ENCODE measurements at regions of chr11 and their contacts with region 1.

Region 1: GRCh38 chr11:109939166-109939810 is 153.9 kb upstream of the ZC3H12C start:
- DNase-seq: peak; percentile 84
- ATAC-seq: peak; percentile 72
- H3K4me3 ChIP-seq: no peak overlapping the region
- H3K27ac ChIP-seq: no peak overlapping the region
- H3K4me1 ChIP-seq: peaks cover 3% of the 10 kb centered on the region; the same call in 1 of the 2 replicates
- H3K27me3 ChIP-seq: no peaks in the 10 kb centered on the region
- CTCF ChIP-seq: peak; percentile 82
- POLR2A ChIP-seq: no peak
- RAD21 ChIP-seq: peak; percentile 89

Region 2: GRCh38 chr11:108887436-108888238 is 1051.7 kb before region 1 on chr11:
- CTCF ChIA-PET with region 1: no interaction called
- POLR2A ChIA-PET with region 1: no interaction called
- dilution Hi-C with region 1: no loop called
- in situ Hi-C with region 1: no loop called
- intact Hi-C with region 1: loop called (anchors 10 kb)
- DNase-seq: no peak
- ATAC-seq: no peak
- H3K4me3 ChIP-seq: no peak overlapping the region
- H3K27ac ChIP-seq: no peak overlapping the region
- H3K4me1 ChIP-seq: peaks cover 8% of the 10 kb centered on the region
- H3K27me3 ChIP-seq: no peaks in the 10 kb centered on the region
- CTCF ChIP-seq: no peak
- POLR2A ChIP-seq: no peak
- RAD21 ChIP-seq: no peak

Region 3: GRCh38 chr11:109432105-109432504 is 507.2 kb before region 1 on chr11:
- CTCF ChIA-PET with region 1: no interaction called
- POLR2A ChIA-PET with region 1: no interaction called
- dilution Hi-C with region 1: no loop called
- in situ Hi-C with region 1: no loop called
- intact Hi-C with region 1: loop called (anchors 5 kb)
- DNase-seq: peak; percentile 60
- ATAC-seq: peak; percentile 74
- H3K4me3 ChIP-seq: no peak overlapping the region
- H3K27ac ChIP-seq: peak overlapping the region; percentile 93; the same call in 1 of the 2 replicates
- H3K4me1 ChIP-seq: peaks cover 7% of the 10 kb centered on the region; the same call in 1 of the 2 replicates
- H3K27me3 ChIP-seq: no peaks in the 10 kb centered on the region
- CTCF ChIP-seq: no peak
- POLR2A ChIP-seq: no peak
- RAD21 ChIP-seq: no peak

Region 4: DNA sequence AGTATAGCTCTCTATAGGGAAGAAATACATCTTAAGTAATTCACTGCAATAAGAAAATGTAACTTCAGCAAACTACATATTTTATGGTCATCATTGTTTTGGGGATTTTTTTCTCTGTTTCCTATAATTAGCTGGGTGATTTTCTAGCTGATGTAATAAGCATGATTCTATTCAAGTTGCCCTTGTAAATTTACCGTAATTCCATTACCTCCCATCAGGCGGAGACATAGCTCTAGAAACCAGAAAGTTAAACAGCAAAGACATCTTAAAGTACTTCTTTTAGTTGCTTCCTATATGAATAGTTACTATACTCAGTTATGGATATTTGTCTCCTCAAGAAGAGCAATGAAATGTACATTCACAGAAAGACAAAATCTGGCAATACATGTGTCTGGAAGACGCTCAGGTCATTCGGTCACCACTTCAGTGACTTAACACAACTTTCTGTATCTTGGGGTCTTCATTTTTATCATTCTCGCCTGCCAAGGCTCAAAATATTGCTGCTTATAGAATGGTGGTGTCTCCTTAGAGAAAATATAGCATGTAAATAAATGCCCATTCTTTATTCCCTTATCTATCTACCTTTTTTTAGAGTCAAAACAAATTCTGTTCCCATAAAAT is 86.0 kb before region 1 on chr11:
- CTCF ChIA-PET with region 1: interaction called, 12 read pairs
- POLR2A ChIA-PET with region 1: no interaction called
- dilution Hi-C with region 1: no loop called
- in situ Hi-C with region 1: no loop called
- intact Hi-C with region 1: loop called (anchors 1 kb)
- DNase-seq: peak; percentile 87
- ATAC-seq: peak; percentile 87
- H3K4me3 ChIP-seq: no peak overlapping the region
- H3K27ac ChIP-seq: no peak overlapping the region
- H3K4me1 ChIP-seq: no peaks in the 10 kb centered on the region; the same call in 1 of the 2 replicates
- H3K27me3 ChIP-seq: no peaks in the 10 kb centered on the region
- CTCF ChIP-seq: peak; percentile 91
- POLR2A ChIP-seq: no peak
- RAD21 ChIP-seq: peak; percentile 87

Region 5: GRCh38 chr11:110032259-110032658 is 93.0 kb after region 1 on chr11:
- CTCF ChIA-PET with region 1: no interaction called
- POLR2A ChIA-PET with region 1: no interaction called
- dilution Hi-C with region 1: no loop called
- in situ Hi-C with region 1: no loop called
- intact Hi-C with region 1: no loop called
- DNase-seq: no peak
- ATAC-seq: no peak
- H3K4me3 ChIP-seq: no peak overlapping the region
- H3K27ac ChIP-seq: no peak overlapping the region
- H3K4me1 ChIP-seq: peaks cover 2% of the 10 kb centered on the region; the same call in 1 of the 2 replicates
- H3K27me3 ChIP-seq: no peaks in the 10 kb centered on the region
- CTCF ChIP-seq: no peak
- POLR2A ChIP-seq: no peak
- RAD21 ChIP-seq: no peak

Region 6: DNA sequence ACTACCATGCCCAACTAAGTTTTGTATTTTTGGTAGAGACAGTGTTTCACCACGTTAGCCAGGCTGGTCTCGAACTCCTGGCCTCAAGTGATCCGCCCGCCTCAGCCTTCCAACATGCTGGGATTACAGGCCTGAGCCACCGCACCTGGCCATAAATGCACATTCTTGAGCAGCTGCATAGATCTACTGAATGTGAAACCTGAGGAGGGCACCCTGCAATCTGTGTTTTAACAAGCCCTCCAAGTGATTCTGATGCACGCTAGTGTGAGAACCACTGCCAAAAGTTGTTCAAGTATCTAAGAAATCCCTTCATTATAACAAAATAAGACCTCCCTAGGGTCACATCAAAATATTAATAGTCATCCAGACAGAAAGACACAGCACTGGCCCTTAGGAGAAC is 267.8 kb after region 1 on chr11:
- CTCF ChIA-PET with region 1: no interaction called
- POLR2A ChIA-PET with region 1: no interaction called
- dilution Hi-C with region 1: no loop called
- in situ Hi-C with region 1: no loop called
- intact Hi-C with region 1: no loop called
- DNase-seq: no peak
- ATAC-seq: no peak
- H3K4me3 ChIP-seq: no peak overlapping the region
- H3K27ac ChIP-seq: no peak overlapping the region
- H3K4me1 ChIP-seq: no peaks in the 10 kb centered on the region
- H3K27me3 ChIP-seq: no peaks in the 10 kb centered on the region
- CTCF ChIP-seq: no peak
- POLR2A ChIP-seq: no peak
- RAD21 ChIP-seq: no peak

Measured in IMR-90 (cell line).